ENCODE measurements at regions of chr9 and their contacts with region 1.

Region 1: DNA sequence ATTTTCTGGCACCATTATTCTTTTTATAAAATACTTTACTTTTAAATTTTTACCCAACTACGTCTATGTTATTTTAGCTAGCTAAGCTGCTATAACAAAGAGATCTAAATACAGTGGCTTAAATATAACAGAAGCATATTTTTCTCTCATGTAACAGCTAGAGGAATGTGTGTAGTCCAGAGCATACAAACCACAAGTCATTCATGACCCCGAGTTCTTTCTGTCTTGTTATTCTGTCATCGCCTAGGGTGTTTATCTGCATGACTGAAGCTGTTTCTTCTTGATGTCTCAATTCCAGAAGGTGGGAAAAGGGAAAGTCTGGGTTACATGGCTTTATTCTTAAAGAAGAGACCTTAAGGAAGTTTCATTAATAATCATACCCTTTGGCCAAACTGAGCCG is 136.9 kb upstream of the RFX3 start:
- DNase-seq: no peak
- ATAC-seq: no peak
- H3K4me3 ChIP-seq: no peak overlapping the region
- H3K27ac ChIP-seq: no peak overlapping the region
- H3K4me1 ChIP-seq: no peaks in the 10 kb centered on the region
- H3K27me3 ChIP-seq: no peaks in the 10 kb centered on the region
- CTCF ChIP-seq: no peak
- POLR2A ChIP-seq: no peak

Region 2: DNA sequence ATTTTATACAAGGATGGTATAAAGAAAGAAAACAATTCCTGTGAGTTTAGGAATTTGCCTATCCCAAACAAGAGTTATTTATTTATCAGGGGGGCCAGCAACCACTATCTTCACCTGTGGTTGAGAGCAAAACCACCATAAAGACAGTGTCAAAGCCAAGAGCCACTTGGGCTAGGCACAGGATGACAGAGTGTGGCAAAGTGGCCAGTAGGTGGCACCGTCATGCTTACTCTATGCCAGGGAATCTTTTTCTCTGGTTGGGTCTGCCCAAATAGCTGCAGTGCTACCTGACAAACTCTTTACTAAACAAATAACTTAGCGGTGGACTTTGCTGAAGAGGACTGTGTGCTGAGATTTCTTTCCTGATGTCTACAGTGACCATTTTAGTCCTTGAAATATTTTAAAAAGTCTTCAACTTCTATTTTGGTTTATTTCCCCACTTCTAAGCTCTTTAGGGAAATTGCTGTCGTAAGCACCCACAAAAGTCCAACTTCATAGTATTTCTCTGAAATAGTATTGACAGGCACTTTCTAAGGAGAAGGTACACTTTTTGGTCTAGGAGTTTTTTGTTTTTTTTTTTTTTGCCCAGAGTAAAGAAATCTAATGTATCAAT is 421.9 kb before region 1 on chr9:
- in situ Hi-C with region 1: loop called in 1 of 4 experiments (anchors 25 kb)
- intact Hi-C with region 1: no loop called
- DNase-seq: peak; percentile 15 to 34
- ATAC-seq: peak; percentile 45 to 77
- H3K4me3 ChIP-seq: no peak overlapping the region
- H3K27ac ChIP-seq: no peak overlapping the region
- H3K4me1 ChIP-seq: no peaks in the 10 kb centered on the region
- H3K27me3 ChIP-seq: no peaks in the 10 kb centered on the region
- CTCF ChIP-seq: peak; percentile 33 to 67 (median 56)
- POLR2A ChIP-seq: no peak

Measured in gastrocnemius medialis (tissue), 4 donors.